RWPE1 (cell line): ENCODE measurements at regions of chr14 and their contacts with region 1.

Region 1: DNA sequence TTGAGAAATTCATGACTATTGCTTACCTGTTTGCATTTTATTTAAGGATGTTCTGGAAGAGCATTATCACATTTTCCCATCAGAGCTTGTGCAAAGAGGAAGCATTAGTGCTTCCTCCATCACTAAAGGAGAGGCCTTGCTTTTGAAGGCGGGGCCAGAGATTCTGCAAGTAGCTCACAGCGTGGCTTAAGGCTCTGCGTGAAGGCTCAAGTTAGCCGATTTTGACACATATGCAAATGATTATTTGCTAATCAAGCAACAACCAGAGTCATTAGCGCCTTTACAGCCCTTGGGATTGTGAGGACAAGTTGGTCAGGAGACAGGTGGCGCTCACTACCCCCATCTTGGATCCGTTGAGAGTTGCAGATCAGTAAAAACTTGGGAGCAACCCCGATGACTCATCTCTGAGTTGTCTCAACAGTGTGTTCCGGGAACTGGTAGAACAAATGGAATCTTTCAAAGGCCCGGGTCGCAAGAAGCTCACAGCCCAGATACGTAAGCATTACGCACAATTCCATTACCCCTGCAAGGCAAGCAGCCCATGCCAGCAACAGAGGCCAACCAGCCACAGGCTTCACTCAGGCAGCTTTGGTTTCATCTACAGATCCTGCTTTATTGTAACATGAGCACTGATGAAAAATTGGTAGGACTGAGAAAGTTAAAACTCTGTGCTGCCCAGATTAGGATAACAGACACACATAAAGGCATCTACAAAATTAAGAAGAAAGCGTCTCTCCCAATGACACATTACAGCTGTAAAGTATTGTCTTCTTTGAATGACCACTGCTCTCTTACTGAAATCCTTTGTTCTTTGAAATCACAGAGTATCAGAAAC is 34.9 kb upstream of the SPTSSA start:
- DNase-seq: peak; percentile 97
- H3K27ac ChIP-seq: peak overlapping the region; percentile 80
- CTCF ChIP-seq: peak; percentile 24

Region 2: GRCh38 chr14:34449819-34450541 is 46.9 kb before region 1 on chr14:
- CTCF ChIA-PET with region 1: no interaction called
- POLR2A ChIA-PET with region 1: no interaction called
- DNase-seq: no peak
- H3K27ac ChIP-seq: no peak overlapping the region
- CTCF ChIP-seq: no peak

Region 3: GRCh38 chr14:34470319-34470718 is 26.6 kb before region 1 on chr14:
- CTCF ChIA-PET with region 1: interaction called, 10 read pairs
- POLR2A ChIA-PET with region 1: no interaction called
- DNase-seq: no peak
- H3K27ac ChIP-seq: no peak overlapping the region
- CTCF ChIP-seq: no peak